ENCODE measurements at regions of chr1 and their contacts with region 1.

Region 1: DNA sequence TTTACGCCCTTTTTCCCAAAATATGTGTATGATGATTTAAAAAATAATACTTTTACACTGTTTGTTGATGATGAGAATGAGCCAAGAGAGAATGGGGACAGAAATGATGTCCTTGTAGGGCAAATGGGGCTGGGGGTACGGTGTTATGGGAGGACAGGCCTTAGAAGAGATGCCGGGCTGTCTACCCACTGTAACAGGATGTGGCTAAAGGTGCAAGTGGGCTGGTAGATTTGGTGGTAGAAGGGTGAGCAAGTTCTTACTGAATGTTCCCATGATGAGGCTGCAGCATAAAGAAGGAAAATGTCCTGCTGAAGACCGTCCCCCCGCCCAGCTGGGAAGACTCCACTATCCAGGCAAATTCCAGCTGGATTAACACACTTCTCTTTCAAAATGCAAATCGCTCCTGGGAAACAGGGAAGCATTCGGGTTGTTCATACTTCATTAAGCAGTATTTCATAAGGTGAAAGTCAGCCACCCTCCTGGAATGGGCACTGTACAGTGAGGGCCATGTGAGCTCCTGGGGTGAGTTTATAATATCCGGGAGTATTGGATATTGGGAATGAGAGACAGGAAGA is 14.0 kb downstream of the GPA33 start:
- DNase-seq: no peak
- H3K4me3 ChIP-seq: no peak overlapping the region
- H3K27ac ChIP-seq: no peak overlapping the region
- H3K4me1 ChIP-seq: peaks cover 10% of the 10 kb centered on the region
- H3K27me3 ChIP-seq: no peaks in the 10 kb centered on the region
- CTCF ChIP-seq: no peak

Region 2: GRCh38 chr1:167173516-167174184 is 97.4 kb after region 1 on chr1:
- CTCF ChIA-PET with region 1: interaction called, 12 read pairs
- POLR2A ChIA-PET with region 1: no interaction called
- intact Hi-C with region 1: no loop called
- DNase-seq: peak; percentile 11 to 55
- H3K4me3 ChIP-seq: peak overlapping the region; percentile 32; the same call in 1 of the 2 replicates
- H3K27ac ChIP-seq: peak overlapping the region; percentile 71
- H3K4me1 ChIP-seq: peaks cover 80% of the 10 kb centered on the region
- H3K27me3 ChIP-seq: no peaks in the 10 kb centered on the region
- CTCF ChIP-seq: no peak

Measured in PC-9 (cell line).